Prostate gland (tissue), 2 donors: ENCODE measurements at regions of chr5 and their contacts with region 1.

Region 1: DNA sequence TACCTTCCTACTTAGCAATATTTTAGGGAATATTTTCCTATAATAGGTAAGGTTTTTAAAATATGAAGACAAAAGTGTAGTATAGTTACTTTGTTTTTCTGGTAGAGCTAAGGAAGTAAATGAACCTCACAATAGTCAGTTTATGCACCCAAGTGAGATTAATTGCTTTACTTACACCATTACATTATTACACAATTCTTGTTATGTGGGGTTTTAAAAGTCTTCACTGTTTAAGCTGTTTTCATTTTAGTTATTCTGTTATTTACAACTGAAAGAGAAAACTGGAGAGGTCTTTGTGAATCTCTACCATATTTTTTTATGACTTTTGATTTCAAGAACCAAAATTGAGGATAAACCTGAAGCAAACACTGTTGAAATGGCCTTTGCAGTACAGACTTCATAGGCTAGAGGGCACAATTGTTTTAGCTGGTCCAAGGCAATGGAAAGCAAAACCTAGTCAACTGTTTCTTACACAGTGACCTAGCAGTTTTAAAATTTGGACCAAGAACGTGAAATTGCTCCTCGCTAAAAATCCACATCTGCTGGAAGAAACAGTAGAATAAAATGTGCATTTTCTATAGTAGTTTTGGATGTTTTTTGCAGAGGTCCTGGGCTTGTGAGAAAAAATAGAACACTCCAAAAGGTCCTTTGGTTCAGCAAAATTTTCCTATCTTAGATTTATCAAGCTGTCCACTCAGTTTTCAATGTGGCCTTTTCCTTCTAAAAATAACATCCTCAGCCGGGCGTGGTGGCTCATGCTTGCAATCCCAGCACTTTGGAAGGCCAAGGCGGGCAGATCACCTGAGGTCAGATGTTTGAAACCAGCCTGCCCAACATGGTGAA is 66.4 kb upstream of the FER start:
- DNase-seq: peak; percentile 10
- H3K4me3 ChIP-seq: no peak overlapping the region
- H3K27ac ChIP-seq: no peak overlapping the region
- H3K4me1 ChIP-seq: no peaks in the 10 kb centered on the region
- H3K27me3 ChIP-seq: no peaks in the 10 kb centered on the region
- CTCF ChIP-seq: peak; percentile 22 to 74 (median 58)
- POLR2A ChIP-seq: no peak

Region 2: GRCh38 chr5:109479260-109479860 is 798.1 kb after region 1 on chr5:
- intact Hi-C with region 1: loop called (anchors 10 kb)
- DNase-seq: no peak
- H3K4me3 ChIP-seq: no peak overlapping the region
- H3K27ac ChIP-seq: no peak overlapping the region
- H3K4me1 ChIP-seq: no peaks in the 10 kb centered on the region
- H3K27me3 ChIP-seq: no peaks in the 10 kb centered on the region
- CTCF ChIP-seq: peak in 3 of 4 experiments; percentile 32 to 52 (median 34)
- POLR2A ChIP-seq: no peak